Activated CD4-positive, alpha-beta memory T cell treated with anti-CD3 and anti-CD28 coated beads, Interleukin-2, amount 10 ng/mL, durations not matched to agents 7 days and 5 days (primary cell): ENCODE measurements at regions of chr9 and their contacts with region 1.

Region 1: DNA sequence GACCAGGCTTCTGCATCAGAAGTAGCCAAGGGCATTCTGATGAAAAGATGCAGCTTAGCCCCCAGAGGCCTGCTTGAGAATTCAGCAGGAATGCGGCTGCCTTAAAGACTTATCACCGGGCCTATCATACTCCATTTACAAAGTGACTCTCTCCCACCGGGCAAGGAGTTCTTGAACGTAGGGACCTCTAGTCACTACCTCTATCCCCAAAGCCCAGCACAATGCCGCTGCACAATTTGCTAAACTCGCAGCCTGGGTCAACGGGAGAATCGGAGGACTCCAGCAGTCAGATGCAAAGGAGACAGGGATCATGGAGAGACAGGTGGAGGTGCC is 661 bp downstream of the PDCL start:
- DNase-seq: no peak
- H3K4me3 Mint-ChIP-seq: peak overlapping the region; percentile 91
- H3K27ac Mint-ChIP-seq: peak overlapping the region; percentile 86
- H3K4me1 Mint-ChIP-seq: peaks cover 30% of the 10 kb centered on the region
- H3K27me3 Mint-ChIP-seq: no peaks in the 10 kb centered on the region

Region 2: DNA sequence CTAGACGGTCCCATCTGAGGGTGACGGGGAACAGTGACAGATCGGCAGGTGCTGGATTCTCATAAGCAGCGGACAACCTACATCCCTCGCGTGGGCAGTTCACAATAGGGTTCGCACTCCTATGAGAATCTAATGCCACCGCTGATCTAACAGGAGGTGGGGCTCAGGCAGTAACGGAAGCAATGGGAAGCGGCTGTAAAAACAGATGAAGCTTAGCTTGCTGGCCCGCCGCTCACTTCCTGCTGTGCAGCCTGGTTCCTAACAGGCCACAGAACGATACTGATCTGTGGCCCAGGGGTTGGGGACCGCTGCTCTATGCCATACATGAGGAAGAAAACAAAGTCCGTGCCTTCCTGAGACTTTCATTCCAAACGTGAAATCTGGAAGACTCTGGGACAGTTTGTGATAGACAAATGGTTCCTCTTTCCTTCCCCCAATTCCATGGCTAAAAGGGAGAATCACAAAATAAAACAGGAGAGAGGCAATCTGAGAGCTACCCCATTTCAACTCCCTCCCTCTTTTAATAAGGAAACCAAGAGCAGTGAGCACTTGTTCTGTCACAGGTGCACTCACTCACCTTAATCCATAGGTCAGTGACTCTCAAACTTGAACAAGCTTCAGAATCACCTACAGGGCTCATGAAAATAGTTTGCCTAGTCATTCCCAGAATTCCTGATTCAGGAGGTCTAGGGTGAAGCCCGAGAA is 11.4 kb before region 1 on chr9:
- CTCF ChIA-PET with region 1: interaction called, 13 read pairs
- POLR2A ChIA-PET with region 1: interaction called, 10 read pairs
- DNase-seq: peak; percentile 60
- H3K4me3 Mint-ChIP-seq: peak overlapping the region; percentile 63
- H3K27ac Mint-ChIP-seq: peak overlapping the region; percentile 87
- H3K4me1 Mint-ChIP-seq: peaks cover 33% of the 10 kb centered on the region
- H3K27me3 Mint-ChIP-seq: no peaks in the 10 kb centered on the region

Region 3: DNA sequence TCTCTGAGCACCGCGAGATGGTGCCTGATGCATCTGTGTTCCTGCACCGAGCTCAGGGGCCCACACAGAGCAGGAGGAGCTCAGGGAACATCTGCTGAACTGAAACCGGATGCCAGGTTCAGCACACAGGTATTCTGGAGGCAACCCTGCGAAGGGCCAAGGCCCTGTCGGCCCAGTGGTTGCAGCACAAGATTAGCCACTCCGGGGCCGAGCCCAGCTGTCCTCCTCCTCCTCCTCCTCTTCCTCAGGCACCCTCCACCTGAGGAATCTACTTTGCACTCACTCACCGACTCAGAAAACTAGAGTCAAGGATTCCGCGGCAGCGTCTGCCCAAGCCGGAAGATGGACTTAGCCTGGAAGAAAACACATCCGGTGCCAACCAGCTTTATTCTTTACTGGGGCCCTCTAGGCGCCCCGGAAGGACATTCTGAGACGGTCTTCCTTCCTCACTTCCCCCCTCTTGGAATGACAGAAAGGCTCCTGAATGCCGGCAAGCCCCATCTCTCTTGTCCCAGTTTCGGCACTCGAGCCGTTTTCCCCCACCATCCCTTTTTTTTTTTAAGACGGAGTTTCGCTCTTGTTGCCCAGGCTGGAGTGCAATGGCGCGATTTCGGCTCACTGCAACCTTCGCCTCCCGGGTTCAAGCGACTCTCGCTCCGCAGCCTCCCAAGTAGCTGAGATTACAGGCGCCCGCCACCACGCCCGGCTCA is 85.4 kb after region 1 on chr9 and contains the start of gene ZBTB6:
- CTCF ChIA-PET with region 1: no interaction called
- POLR2A ChIA-PET with region 1: interaction called, 15 read pairs
- DNase-seq: peak; percentile 76
- H3K4me3 Mint-ChIP-seq: peak within 1 kb of the TSS; percentile 96
- H3K27ac Mint-ChIP-seq: peak within 1 kb of the TSS; percentile 99
- H3K4me1 Mint-ChIP-seq: peaks cover 33% of the 10 kb centered on the region
- H3K27me3 Mint-ChIP-seq: no peaks in the 10 kb centered on the region
- total RNA-seq, gene ZBTB6: 12.1 to 12.7 TPM

Region 4: GRCh38 chr9:122940603-122941559 is 113.2 kb after region 1 on chr9 and contains the start of gene RABGAP1:
- CTCF ChIA-PET with region 1: no interaction called
- POLR2A ChIA-PET with region 1: interaction called, 10 read pairs
- DNase-seq: peak; percentile 99
- H3K4me3 Mint-ChIP-seq: peak within 1 kb of the TSS; percentile 92
- H3K27ac Mint-ChIP-seq: peak within 1 kb of the TSS; percentile 78
- H3K4me1 Mint-ChIP-seq: peaks cover 40% of the 10 kb centered on the region
- H3K27me3 Mint-ChIP-seq: no peaks in the 10 kb centered on the region
- total RNA-seq, gene RABGAP1: 26.5 to 32.3 TPM